ENCODE measurements at regions of chr4 and their contacts with region 1.

Region 1: DNA sequence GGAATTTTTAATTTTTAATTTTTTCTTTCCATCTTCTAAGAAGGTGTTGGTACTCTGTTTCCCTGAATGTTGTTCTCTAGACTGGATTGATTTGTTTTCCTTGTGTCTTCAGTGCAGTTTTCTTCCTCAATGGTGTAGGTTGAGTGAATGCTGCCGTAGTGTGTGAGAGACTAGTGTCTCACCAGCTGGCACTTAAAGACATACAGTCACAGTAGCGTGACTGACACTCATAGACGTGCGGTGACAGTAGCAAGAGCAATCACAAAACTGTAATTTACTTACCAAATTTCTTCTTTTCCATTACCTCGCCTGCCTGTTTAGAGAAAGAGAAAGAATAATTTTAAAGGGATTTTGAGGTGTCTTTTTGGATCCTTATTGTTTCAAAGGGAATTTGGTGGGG is 21.4 kb upstream of the PGM2 start:
- DNase-seq: no peak
- H3K4me3 ChIP-seq: no peak overlapping the region
- H3K27ac ChIP-seq: no peak overlapping the region
- H3K4me1 ChIP-seq: no peaks in the 10 kb centered on the region
- H3K27me3 ChIP-seq: no peaks in the 10 kb centered on the region
- CTCF ChIP-seq: no peak
- POLR2A ChIP-seq: no peak

Region 2: DNA sequence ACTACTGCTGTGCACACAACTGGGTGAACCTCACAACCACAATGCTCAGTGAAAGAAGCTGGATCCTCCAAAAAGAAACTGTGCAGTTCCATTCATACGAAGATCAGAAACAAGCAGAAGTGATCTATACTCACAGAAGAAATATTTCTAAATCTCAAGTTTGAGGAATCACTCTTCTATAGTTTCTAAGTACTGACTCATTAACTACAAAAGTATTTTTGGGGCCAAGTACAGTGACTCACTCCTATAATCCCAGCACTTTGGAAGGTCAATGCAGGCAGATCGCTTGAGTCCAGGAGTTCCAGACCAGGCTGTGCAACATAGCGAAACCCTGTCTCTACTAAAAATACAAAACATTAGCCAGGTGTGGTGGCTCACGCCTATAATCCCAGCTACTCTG is 67.6 kb before region 1 on chr4:
- intact Hi-C with region 1: no loop called
- DNase-seq: no peak
- H3K4me3 ChIP-seq: no peak overlapping the region
- H3K27ac ChIP-seq: no peak overlapping the region
- H3K4me1 ChIP-seq: no peaks in the 10 kb centered on the region
- H3K27me3 ChIP-seq: no peaks in the 10 kb centered on the region
- CTCF ChIP-seq: no peak
- POLR2A ChIP-seq: no peak

Region 3: DNA sequence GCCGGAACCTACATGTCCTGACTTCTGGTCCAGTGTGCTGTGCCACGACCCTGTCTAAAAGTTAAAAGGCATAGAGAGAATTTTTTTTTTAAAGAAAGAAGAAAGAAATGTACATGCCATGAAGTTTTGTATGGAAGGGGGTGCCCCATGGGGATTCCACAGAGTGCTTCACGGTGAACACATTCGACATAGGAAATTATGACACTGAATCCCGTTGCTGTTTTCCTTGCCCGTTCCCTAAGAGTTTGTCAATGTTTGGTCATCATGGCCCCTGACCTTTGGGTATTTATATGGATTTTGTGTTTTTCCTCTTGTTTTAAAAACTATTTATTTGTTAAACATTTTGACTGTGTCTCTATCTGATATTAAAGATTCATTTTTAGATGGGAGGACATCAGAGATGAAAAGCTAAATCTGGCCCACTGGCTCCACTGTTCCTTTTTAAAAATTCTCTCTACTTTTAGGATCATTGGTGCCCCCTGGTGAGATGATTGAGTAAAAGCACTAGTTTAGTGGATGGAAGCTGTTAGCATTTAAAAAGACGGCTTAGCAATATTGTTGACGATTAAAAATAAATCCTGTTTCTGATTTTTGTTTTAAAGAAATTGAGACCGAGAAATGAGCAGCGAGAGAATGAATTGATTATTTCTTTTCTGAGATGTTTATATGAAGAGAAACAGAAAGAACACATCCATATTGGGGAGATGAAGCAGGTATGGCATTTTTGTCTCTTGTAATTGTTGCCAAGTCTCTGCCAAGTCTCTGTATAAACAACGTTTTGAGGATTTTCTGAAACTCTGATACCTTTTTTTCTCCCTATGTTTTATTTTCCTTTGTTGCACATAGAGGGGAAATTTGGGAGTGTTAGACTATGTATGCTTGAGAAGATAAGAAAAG is 230.1 kb after region 1 on chr4:
- intact Hi-C with region 1: loop called (anchors 5 kb)
- DNase-seq: no peak
- H3K4me3 ChIP-seq: no peak overlapping the region
- H3K27ac ChIP-seq: peak overlapping the region; percentile 26
- H3K4me1 ChIP-seq: no peaks in the 10 kb centered on the region
- H3K27me3 ChIP-seq: no peaks in the 10 kb centered on the region
- CTCF ChIP-seq: peak; percentile 27 to 77 (median 66)
- POLR2A ChIP-seq: no peak

Measured in vagina (tissue), 2 donors.